Activated CD4-positive, alpha-beta memory T cell treated with anti-CD3 and anti-CD28 coated beads, Interleukin-2, amount 10 ng/mL, durations not matched to agents 7 days and 5 days (primary cell): ENCODE measurements at regions of chr10 and their contacts with region 1.

Region 1: GRCh38 chr10:30433730-30434272 is at the start of gene MAP3K8:
- DNase-seq: peak; percentile 85
- H3K4me3 Mint-ChIP-seq: peak within 1 kb of the TSS; percentile 85
- H3K27ac Mint-ChIP-seq: peak within 1 kb of the TSS; percentile 84
- H3K4me1 Mint-ChIP-seq: peaks cover 54% of the 10 kb centered on the region
- H3K27me3 Mint-ChIP-seq: no peaks in the 10 kb centered on the region
- total RNA-seq, gene MAP3K8: 39.5 to 40.3 TPM

Region 2: GRCh38 chr10:30413996-30414576 is 19.7 kb before region 1 on chr10:
- CTCF ChIA-PET with region 1: interaction called, 15 read pairs
- POLR2A ChIA-PET with region 1: interaction called, 106 read pairs
- DNase-seq: no peak
- H3K4me3 Mint-ChIP-seq: no peak overlapping the region
- H3K27ac Mint-ChIP-seq: no peak overlapping the region
- H3K4me1 Mint-ChIP-seq: peaks cover 42% of the 10 kb centered on the region
- H3K27me3 Mint-ChIP-seq: no peaks in the 10 kb centered on the region

Region 3: DNA sequence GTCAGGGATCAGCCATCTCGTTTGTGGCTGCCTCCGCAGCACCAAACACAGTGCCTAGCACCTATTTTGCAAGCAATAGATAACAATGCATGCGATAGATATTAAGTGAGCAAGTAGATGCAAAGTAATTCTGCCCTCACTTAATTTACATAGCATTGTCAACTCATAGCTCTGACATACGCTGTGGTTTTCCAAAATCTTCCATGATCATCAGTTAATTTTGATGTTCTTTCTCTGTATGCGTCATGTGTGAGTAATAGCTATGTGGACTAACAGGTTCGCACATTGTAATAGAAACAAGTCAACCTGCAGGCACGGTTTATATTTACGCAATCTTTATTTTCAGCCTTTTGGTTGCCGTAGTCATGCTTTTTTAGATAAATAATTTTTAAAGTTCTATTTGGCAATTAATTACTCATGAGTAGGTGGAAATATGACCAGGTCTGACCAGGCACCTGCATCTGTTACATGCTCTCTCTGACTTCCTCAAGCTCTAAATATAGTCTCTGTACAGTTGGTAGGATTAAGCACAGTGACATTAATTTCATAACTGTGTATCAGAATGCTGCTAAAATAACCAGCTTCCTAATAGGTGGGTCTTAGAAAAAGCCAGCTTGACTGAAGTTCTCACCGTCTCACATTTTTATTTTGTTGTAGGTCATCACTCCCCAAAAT is 13.5 kb after region 1 on chr10:
- CTCF ChIA-PET with region 1: interaction called, 4 read pairs
- POLR2A ChIA-PET with region 1: interaction called, 19 read pairs
- DNase-seq: no peak
- H3K4me3 Mint-ChIP-seq: no peak overlapping the region
- H3K27ac Mint-ChIP-seq: no peak overlapping the region
- H3K4me1 Mint-ChIP-seq: peaks cover 47% of the 10 kb centered on the region
- H3K27me3 Mint-ChIP-seq: no peaks in the 10 kb centered on the region

Region 4: DNA sequence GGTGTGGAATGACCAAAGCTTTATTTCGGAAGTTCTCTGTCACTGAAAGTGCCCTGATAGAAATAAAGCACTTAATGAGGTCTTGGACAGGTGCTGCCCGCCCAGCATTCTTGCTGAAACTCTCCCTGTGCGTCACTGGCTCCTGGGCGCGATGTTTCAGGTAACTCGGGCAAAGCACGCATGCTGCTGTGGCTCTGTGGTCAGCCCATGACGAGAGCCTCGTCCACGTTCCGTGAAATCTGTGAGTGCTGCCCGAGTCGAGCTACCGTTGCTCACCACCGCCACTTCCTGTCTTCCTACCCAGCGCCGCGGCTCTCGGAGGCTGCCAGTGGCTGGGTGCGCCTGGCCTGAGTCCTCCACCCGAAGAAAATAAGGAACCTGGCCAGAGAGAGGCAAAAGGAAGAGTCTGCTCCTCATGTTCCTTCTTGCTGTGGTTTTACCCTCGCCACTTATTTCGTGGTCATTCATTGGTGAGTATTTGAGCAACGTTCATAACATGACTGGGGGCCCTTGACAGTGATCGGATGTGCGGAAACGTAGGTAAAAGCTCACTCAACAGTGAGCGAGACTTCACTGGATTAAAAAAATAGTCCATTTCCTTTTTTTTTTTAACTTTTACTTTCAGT is 95.7 kb after region 1 on chr10:
- CTCF ChIA-PET with region 1: interaction called, 67 read pairs
- POLR2A ChIA-PET with region 1: interaction called, 68 read pairs
- DNase-seq: peak; percentile 90
- H3K4me3 Mint-ChIP-seq: peak overlapping the region; percentile 71
- H3K27ac Mint-ChIP-seq: peak overlapping the region; percentile 97
- H3K4me1 Mint-ChIP-seq: peaks cover 76% of the 10 kb centered on the region
- H3K27me3 Mint-ChIP-seq: peaks cover 5% of the 10 kb centered on the region